ENCODE measurements at regions of chrX and their contacts with region 1.

Region 1: DNA sequence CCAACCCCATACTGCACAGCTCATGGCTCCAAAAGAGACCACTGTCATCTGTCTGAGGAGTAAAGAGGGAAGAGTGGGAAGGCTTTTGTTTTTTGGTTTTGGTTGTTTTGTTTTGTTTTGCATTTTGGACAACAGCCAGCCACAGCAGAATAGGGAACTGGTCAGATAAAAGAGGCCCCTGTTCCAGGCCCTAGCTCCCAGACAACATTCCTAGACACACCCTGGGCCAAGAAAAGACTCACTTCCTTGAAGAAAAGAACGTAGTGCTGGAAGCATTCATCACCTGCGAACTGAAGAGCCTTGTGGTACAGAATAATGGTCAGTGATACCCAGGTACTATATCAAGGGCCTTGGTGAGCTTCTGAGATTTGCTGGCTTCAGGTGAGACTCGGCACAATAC is 619.4 kb upstream of the SPANXN1 start:
- DNase-seq: no peak
- H3K4me3 ChIP-seq: no peak overlapping the region
- H3K27ac ChIP-seq: no peak overlapping the region
- H3K4me1 ChIP-seq: no peaks in the 10 kb centered on the region
- H3K27me3 ChIP-seq: no peaks in the 10 kb centered on the region
- CTCF ChIP-seq: no peak
- EP300 ChIP-seq: no peak
- POLR2A ChIP-seq: no peak

Region 2: GRCh38 chrX:144327495-144327894 is 300.5 kb before region 1 on chrX:
- in situ Hi-C with region 1: no loop called
- intact Hi-C with region 1: no loop called
- DNase-seq: no peak
- H3K4me3 ChIP-seq: no peak overlapping the region
- H3K27ac ChIP-seq: no peak overlapping the region
- H3K4me1 ChIP-seq: no peaks in the 10 kb centered on the region
- H3K27me3 ChIP-seq: no peaks in the 10 kb centered on the region
- CTCF ChIP-seq: no peak
- EP300 ChIP-seq: no peak
- POLR2A ChIP-seq: no peak

Region 3: GRCh38 chrX:145393702-145394235 is 765.8 kb after region 1 on chrX:
- in situ Hi-C with region 1: no loop called
- intact Hi-C with region 1: loop called (anchors 5 kb)
- DNase-seq: no peak
- H3K4me3 ChIP-seq: no peak overlapping the region
- H3K27ac ChIP-seq: no peak overlapping the region
- H3K4me1 ChIP-seq: no peaks in the 10 kb centered on the region
- H3K27me3 ChIP-seq: no peaks in the 10 kb centered on the region
- CTCF ChIP-seq: peak in 1 of 5 experiments; percentile 3
- EP300 ChIP-seq: no peak
- POLR2A ChIP-seq: no peak

Measured in transverse colon (tissue), 4 donors.